HepG2 (cell line): ENCODE measurements at regions of chr6 and their contacts with region 1.

Region 1: GRCh38 chr6:52664186-52664990 is 6.5 kb upstream of the TMEM14A start:
- DNase-seq: peak; percentile 97
- ATAC-seq: peak; percentile 96
- H3K4me3 ChIP-seq: peak overlapping the region; percentile 72 to 89 (median 89)
- H3K27ac ChIP-seq: peak overlapping the region; percentile 64
- H3K4me1 ChIP-seq: peaks cover 50% of the 10 kb centered on the region
- H3K27me3 ChIP-seq: no peaks in the 10 kb centered on the region; a peak in 1 of 5 replicates
- CTCF ChIP-seq: no peak
- EP300 ChIP-seq: no peak; a peak in 1 of 4 replicates
- POLR2A ChIP-seq: peak; percentile 96 to 98
- RAD21 ChIP-seq: peak; percentile 40

Region 2: GRCh38 chr6:52162940-52163908 is 501.2 kb before region 1 on chr6:
- CTCF ChIA-PET with region 1: no interaction called
- POLR2A ChIA-PET with region 1: no interaction called
- in situ Hi-C with region 1: loop called (anchors 25 kb)
- intact Hi-C with region 1: loop called (anchors 2 kb)
- DNase-seq: peak; percentile 53
- ATAC-seq: peak; percentile 87
- H3K4me3 ChIP-seq: no peak overlapping the region
- H3K27ac ChIP-seq: no peak overlapping the region
- H3K4me1 ChIP-seq: peaks cover 25% of the 10 kb centered on the region
- H3K27me3 ChIP-seq: no peaks in the 10 kb centered on the region
- CTCF ChIP-seq: peak; percentile 85
- EP300 ChIP-seq: no peak
- POLR2A ChIP-seq: no peak
- RAD21 ChIP-seq: peak; percentile 88

Region 3: DNA sequence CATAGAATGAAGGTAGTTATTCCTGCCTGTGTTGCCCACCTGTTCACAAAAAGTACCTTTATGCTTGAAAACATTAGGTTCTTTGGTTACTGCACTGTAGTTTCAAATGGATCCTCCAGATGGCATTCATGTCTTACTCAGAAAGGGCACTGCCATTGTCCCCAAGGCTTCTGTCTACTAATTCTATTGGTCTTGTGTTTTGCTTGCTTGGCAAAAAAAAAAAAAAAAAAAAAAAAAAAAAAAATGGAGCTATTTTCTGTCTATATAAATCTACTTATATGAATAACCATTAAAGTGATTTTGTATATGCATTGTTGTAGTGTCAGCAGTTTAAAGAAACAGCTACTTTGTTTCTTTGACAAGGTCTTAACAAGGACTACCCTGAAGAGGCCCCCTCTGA is 256.9 kb before region 1 on chr6:
- CTCF ChIA-PET with region 1: interaction called, 39 read pairs
- POLR2A ChIA-PET with region 1: no interaction called
- in situ Hi-C with region 1: no loop called
- intact Hi-C with region 1: loop called (anchors 1 kb)
- DNase-seq: peak; percentile 68
- ATAC-seq: peak; percentile 84
- H3K4me3 ChIP-seq: no peak overlapping the region
- H3K27ac ChIP-seq: no peak overlapping the region
- H3K4me1 ChIP-seq: 0 out of 2 replicates have a peak, but pooled peaks cover 15% of the 10 kb centered on the region
- H3K27me3 ChIP-seq: no peaks in the 10 kb centered on the region
- CTCF ChIP-seq: peak; percentile 67
- EP300 ChIP-seq: no peak
- POLR2A ChIP-seq: no peak
- RAD21 ChIP-seq: peak; percentile 66; the same call in 1 of the 2 replicates

Region 4: GRCh38 chr6:52517502-52518278 is 146.7 kb before region 1 on chr6:
- CTCF ChIA-PET with region 1: interaction called, 3 read pairs
- POLR2A ChIA-PET with region 1: no interaction called
- in situ Hi-C with region 1: no loop called
- intact Hi-C with region 1: loop called (anchors 10 kb)
- DNase-seq: peak; percentile 92
- ATAC-seq: peak; percentile 92
- H3K4me3 ChIP-seq: peak overlapping the region; percentile 10 to 52 (median 26); a peak in 5 of 6 replicates
- H3K27ac ChIP-seq: peak overlapping the region; percentile 73
- H3K4me1 ChIP-seq: peaks cover 74% of the 10 kb centered on the region
- H3K27me3 ChIP-seq: no peaks in the 10 kb centered on the region
- CTCF ChIP-seq: peak; percentile 26; the same call in 1 of the 2 replicates
- EP300 ChIP-seq: peak in 1 of 2 experiments; percentile 64; a peak in 2 of 4 replicates
- POLR2A ChIP-seq: peak; percentile 40 to 44; a peak in 1 of 4 replicates
- RAD21 ChIP-seq: no peak